ENCODE measurements at regions of chr3 and their contacts with region 1.

Region 1: DNA sequence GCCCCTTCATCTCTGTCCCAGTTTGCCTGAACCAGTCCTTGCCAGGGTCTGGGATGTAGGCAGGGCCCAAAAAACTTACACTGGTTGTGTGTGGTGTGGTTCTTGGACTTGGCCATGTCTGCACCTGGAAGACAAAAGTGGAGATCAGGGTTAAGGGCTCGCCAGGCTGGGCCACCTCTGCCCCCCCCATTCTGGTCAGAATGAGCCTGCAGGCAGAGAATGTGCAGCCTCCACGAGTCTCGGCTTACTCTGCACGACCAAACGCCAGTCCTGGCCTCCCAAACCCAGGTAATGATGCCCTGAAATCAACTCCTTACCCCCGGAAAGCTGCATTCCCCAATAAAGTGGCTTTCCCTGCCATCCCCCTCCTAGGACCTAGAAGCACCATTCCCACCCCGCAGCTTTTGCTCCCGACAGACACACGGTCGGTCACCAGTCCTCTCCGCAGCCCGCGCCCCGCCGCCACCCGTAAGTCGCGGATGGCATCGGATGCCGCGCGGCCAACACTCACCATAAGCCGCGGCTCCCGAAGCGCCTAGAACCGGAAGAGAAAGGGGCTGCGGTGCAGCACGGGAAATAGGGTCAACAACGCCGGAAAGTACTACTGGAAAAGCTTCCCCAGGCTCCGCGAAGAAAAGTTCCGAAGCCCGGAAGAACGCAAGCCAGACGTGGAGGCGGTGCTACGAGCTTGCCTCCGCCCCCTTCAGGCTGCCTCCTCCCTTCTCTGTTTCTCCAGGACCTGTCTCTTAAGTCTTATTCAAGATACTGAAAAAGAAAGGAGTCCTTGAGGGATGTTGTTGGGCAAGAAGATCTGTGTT is at the start of gene RPL29:
- DNase-seq: peak; percentile 89 to 91
- H3K4me3 ChIP-seq: peak within 1 kb of the TSS; percentile 76 to 100 (median 88)
- H3K27ac ChIP-seq: peak within 1 kb of the TSS; percentile 91
- H3K4me1 ChIP-seq: peaks cover 4 to 20% (median 8%) of the 10 kb centered on the region in 4 experiments; a peak in 5 of 7 replicates
- H3K27me3 ChIP-seq: no peaks in the 10 kb centered on the region
- CTCF ChIP-seq: peak in 1 of 3 experiments; percentile 2; a peak in 1 of 4 replicates
- EP300 ChIP-seq: peak in 1 of 2 experiments; percentile 24; a peak in 1 of 3 replicates
- POLR2A ChIP-seq: peak in 1 of 2 experiments; percentile 96; a peak in 2 of 3 replicates
- RAD21 ChIP-seq: no peak
- total RNA-seq, gene RPL29: 1,467 and 1,476 TPM in 2 replicates

Region 2: DNA sequence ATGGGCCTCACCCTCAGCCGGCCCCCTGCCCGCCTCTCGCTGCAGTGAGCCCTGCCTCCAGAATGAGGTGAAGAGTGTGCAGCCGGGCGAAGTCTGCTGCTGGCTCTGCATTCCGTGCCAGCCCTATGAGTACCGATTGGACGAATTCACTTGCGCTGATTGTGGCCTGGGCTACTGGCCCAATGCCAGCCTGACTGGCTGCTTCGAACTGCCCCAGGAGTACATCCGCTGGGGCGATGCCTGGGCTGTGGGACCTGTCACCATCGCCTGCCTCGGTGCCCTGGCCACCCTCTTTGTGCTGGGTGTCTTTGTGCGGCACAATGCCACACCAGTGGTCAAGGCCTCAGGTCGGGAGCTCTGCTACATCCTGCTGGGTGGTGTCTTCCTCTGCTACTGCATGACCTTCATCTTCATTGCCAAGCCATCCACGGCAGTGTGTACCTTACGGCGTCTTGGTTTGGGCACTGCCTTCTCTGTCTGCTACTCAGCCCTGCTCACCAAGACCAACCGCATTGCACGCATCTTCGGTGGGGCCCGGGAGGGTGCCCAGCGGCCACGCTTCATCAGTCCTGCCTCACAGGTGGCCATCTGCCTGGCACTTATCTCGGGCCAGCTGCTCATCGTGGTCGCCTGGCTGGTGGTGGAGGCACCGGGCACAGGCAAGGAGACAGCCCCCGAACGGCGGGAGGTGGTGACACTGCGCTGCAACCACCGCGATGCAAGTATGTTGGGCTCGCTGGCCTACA is 280.2 kb before region 1 on chr3:
- CTCF ChIA-PET with region 1: no interaction called
- POLR2A ChIA-PET with region 1: no interaction called
- DNase-seq: no peak
- H3K4me3 ChIP-seq: no peak overlapping the region
- H3K27ac ChIP-seq: no peak overlapping the region
- H3K4me1 ChIP-seq: peaks cover 0 to 3% (median 0%) of the 10 kb centered on the region in 4 experiments; a peak in 1 of 7 replicates
- H3K27me3 ChIP-seq: no peaks in the 10 kb centered on the region
- CTCF ChIP-seq: no peak
- EP300 ChIP-seq: no peak
- POLR2A ChIP-seq: no peak
- RAD21 ChIP-seq: no peak

Region 3: DNA sequence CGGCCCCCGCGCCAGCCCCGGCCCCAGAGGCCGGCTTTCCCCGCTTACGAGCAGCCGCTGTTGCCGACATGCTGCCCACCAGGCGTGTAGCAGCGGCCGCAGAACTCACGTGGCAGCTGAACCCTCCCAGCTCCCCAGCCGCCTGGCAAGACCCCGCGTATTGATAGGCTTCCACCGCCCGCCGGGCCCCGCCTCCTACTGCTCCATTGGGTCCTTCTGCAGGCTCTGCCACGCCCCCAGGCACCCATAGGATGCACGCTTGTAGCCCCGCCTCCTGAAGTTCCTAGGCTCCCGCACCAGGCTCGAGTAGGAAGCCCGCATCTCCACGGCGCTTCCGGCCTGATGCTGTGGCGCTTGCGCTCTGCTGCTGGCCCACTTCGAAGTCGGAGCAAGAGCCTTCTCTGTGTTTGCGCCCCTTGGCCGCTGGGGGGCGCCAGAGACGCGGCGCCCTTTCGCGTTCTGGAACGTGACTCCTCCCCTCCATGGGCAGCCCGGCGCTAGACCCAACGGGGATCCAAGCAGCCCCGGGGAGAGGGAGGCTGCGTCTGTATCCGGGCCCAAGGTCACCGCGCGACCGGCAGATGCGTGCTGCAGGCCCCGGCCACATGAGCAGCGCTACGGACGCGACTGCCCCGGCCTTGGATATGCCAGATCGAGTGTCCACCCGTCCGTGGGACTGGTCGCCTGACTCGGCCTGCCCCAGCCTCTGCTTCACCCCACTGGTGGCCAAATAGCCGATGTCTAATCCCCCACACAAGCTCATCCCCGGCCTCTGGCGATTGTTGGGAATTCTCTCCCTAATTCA is 53.6 kb before region 1 on chr3 and contains the starts of genes PARP3 and RRP9:
- CTCF ChIA-PET with region 1: interaction called, 7 read pairs
- POLR2A ChIA-PET with region 1: interaction called, 148 read pairs
- DNase-seq: peak; percentile 99 to 100
- H3K4me3 ChIP-seq: peak within 1 kb of the TSS; percentile 50 to 88 (median 82)
- H3K27ac ChIP-seq: no peak within 1 kb of the TSS
- H3K4me1 ChIP-seq: peaks cover 2 to 13% (median 6%) of the 10 kb centered on the region in 4 experiments
- H3K27me3 ChIP-seq: peaks cover 0 to 10% (median 4%) of the 10 kb centered on the region in 4 experiments; a peak in 4 of 7 replicates
- CTCF ChIP-seq: peak in 2 of 3 experiments; percentile 97; a peak in 3 of 4 replicates
- EP300 ChIP-seq: no peak
- POLR2A ChIP-seq: peak in 1 of 2 experiments; percentile 71; a peak in 1 of 3 replicates
- RAD21 ChIP-seq: peak; percentile 84 to 90
- total RNA-seq, gene PARP3: 1.1 and 1.3 TPM in 2 replicates
- total RNA-seq, gene RRP9: 55.6 TPM in 2 replicates

Region 4: GRCh38 chr3:51982782-51983577 is 12.6 kb before region 1 on chr3 and contains the start of gene ACY1:
- CTCF ChIA-PET with region 1: interaction called, 46 read pairs
- POLR2A ChIA-PET with region 1: interaction called, 923 read pairs
- DNase-seq: peak in 1 of 2 experiments; percentile 89
- H3K4me3 ChIP-seq: peak within 1 kb of the TSS; percentile 53 to 63 (median 56)
- H3K27ac ChIP-seq: peak within 1 kb of the TSS; percentile 45; the same call in 1 of the 2 replicates
- H3K4me1 ChIP-seq: peaks cover 0 to 12% (median 9%) of the 10 kb centered on the region in 4 experiments; a peak in 6 of 7 replicates
- H3K27me3 ChIP-seq: no peaks in the 10 kb centered on the region
- CTCF ChIP-seq: no peak
- EP300 ChIP-seq: no peak
- POLR2A ChIP-seq: peak in 1 of 2 experiments; percentile 86; a peak in 2 of 3 replicates
- RAD21 ChIP-seq: no peak
- total RNA-seq, gene ACY1: 45.5 and 48.3 TPM in 2 replicates

Region 5: DNA sequence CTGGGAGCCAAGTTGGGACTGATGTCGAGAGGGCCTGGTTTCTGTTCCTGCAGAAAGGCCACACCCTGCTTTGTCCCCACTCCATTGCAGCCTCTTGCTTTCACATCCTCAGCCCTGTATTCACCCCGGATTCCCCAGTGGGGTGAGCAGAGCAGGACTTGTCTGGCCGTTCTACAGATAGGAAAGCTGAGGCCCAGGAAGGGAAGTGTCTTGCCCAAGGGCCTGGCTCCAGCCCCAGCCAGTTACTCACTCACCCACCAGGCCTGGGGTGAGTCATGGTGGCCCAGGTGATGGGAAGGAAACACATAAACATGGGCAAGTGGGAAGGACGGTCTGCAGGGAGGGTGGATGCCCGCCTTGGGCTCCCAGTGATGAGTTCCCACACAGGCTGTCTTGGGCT is 66.9 kb after region 1 on chr3:
- CTCF ChIA-PET with region 1: interaction called, 984 read pairs
- POLR2A ChIA-PET with region 1: interaction called, 60 read pairs
- DNase-seq: no peak
- H3K4me3 ChIP-seq: no peak overlapping the region
- H3K27ac ChIP-seq: no peak overlapping the region
- H3K4me1 ChIP-seq: peaks cover 0 to 7% (median 5%) of the 10 kb centered on the region in 4 experiments; a peak in 6 of 7 replicates
- H3K27me3 ChIP-seq: peaks cover 0 to 14% (median 7%) of the 10 kb centered on the region in 4 experiments; a peak in 4 of 7 replicates
- CTCF ChIP-seq: no peak
- EP300 ChIP-seq: no peak
- POLR2A ChIP-seq: no peak
- RAD21 ChIP-seq: no peak

Region 6: GRCh38 chr3:52154117-52155094 is 158.9 kb after region 1 on chr3 and contains the start of gene POC1A:
- CTCF ChIA-PET with region 1: interaction called, 10 read pairs
- POLR2A ChIA-PET with region 1: interaction called, 30 read pairs
- DNase-seq: peak; percentile 80 to 96
- H3K4me3 ChIP-seq: peak within 1 kb of the TSS; percentile 79 to 90 (median 86)
- H3K27ac ChIP-seq: peak within 1 kb of the TSS; percentile 58; the same call in 1 of the 2 replicates
- H3K4me1 ChIP-seq: peaks cover 2 to 6% (median 4%) of the 10 kb centered on the region in 4 experiments; a peak in 4 of 7 replicates
- H3K27me3 ChIP-seq: no peaks in the 10 kb centered on the region
- CTCF ChIP-seq: no peak
- EP300 ChIP-seq: no peak
- POLR2A ChIP-seq: peak in 1 of 2 experiments; percentile 62; a peak in 2 of 3 replicates
- RAD21 ChIP-seq: no peak
- total RNA-seq, gene POC1A: 35.7 and 39.2 TPM in 2 replicates